Activated T-helper 2 cell treated with anti-CD3 and anti-CD28 coated beads, Interferon-gamma antibody, Interleukin-2, Interleukin-4, amounts not matched to agents 10 μg/mL and 5 μg/mL and 100 μg/mL, durations not matched to agents 14 hours and 24 hours and 36 hours (primary cell): ENCODE measurements at regions of chr16 and their contacts with region 1.

Region 1: DNA sequence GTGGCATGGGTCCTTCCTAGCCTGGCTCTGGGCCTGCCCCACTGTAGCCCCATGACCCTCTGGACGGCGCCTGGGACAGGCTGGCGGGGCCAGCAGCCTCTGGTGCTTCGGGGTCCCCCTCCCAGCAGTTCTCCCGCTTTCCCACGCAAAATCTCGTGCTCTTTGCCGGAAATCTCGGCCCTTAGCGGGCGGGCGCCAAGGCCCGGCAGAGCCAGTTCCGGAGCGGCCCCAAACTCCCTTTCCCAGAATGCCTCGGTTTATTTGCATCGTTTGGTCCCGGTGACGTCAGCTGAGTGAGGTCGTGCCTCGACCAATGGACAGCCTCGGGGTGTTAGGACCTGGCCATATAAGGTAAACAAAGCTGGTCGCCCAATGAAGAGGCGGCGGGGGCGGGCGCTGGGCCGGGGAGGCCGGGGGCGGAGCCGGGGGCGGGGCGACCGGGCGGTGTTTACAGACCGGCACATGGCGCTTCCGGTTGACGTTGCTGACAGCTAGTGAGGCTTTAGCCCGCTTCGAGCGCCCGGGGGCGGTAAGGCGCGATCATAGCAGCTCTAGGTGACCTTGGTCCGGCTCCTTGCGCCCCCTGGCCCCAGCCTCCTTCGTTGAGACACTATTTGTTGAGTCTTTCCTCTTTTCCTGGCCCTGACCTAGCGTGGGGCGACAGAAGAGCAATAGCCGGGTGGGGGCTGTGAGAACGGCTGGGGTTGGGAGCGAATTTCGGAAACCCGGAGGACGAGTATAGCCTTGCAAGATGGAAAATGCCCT is 1.5 kb upstream of the UBALD1 start:
- DNase-seq: peak; percentile 99
- H3K4me3 Mint-ChIP-seq: peak overlapping the region; percentile 92
- H3K27ac Mint-ChIP-seq: peak overlapping the region; percentile 98
- H3K4me1 Mint-ChIP-seq: peaks cover 16% of the 10 kb centered on the region
- H3K27me3 Mint-ChIP-seq: no peaks in the 10 kb centered on the region

Region 2: DNA sequence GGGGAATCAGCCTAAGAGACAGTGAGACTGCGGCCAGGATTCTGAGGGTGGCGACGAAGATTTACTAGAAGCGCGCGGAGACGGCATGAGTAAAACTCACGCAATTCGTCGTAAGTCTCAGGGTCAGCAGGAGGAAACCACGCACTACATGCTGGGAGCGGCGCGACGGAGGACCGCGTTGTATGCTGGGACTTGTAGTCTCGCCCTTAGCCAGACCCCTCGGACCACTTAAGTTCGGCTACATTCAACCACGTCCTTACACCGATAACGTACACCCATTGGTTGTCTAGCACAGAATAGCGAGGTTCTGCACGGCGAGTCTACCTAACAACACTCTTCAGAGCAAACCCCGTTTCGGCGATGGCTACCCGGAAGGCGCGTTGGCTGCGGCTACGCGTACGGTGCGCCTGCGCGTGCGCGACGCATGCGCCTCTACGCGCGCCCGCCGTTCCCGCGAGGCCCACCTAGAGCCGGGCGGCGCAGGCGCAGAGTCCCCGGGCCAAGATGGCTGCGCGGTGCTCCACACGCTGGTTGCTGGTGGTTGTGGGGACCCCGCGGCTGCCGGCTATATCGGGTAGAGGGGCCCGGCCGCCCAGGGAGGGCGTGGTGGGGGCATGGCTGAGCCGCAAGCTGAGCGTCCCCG is 190.7 kb before region 1 on chr16 and contains the start of gene DNAJA3:
- intact Hi-C with region 1: loop called (anchors 1 kb)
- DNase-seq: peak; percentile 91
- H3K4me3 Mint-ChIP-seq: peak within 1 kb of the TSS; percentile 98
- H3K27ac Mint-ChIP-seq: peak within 1 kb of the TSS; percentile 100
- H3K4me1 Mint-ChIP-seq: peaks cover 22% of the 10 kb centered on the region
- H3K27me3 Mint-ChIP-seq: no peaks in the 10 kb centered on the region
- total RNA-seq, gene DNAJA3: 77.1 and 88.4 TPM in 2 replicates

Region 3: GRCh38 chr16:4957720-4958509 is 341.7 kb after region 1 on chr16 and contains the start of gene SEC14L5:
- intact Hi-C with region 1: loop called (anchors 1 kb)
- DNase-seq: peak; percentile 89
- H3K4me3 Mint-ChIP-seq: peak within 1 kb of the TSS; percentile 82
- H3K27ac Mint-ChIP-seq: no peak within 1 kb of the TSS
- H3K4me1 Mint-ChIP-seq: peaks cover 13% of the 10 kb centered on the region
- H3K27me3 Mint-ChIP-seq: peaks cover 13% of the 10 kb centered on the region
- total RNA-seq, gene SEC14L5: not detected in 2 replicates